ENCODE measurements at regions of chr5 and their contacts with region 1.

Region 1: DNA sequence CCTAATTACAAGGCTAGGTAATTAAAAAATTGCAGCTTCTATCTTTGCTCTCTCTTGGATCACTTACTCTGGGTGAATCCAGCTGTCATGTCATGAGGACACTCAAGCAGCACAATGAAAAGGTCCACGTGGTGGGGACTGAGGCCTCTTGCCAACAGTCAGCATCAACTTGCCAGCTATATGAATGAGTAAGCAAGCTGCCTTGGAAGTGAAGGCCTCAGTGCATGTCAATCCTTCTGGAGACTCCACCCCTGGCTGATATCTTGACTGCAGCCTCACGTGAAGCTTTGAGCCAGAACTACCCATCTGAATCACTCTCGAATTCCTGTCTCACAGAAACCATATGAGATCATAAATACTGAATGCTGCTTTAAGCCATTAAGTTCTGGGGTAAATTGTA is 140.5 kb downstream of the SNX18 start:
- DNase-seq: no peak
- ATAC-seq: no peak
- H3K4me3 ChIP-seq: no peak overlapping the region
- H3K27ac ChIP-seq: no peak overlapping the region
- H3K4me1 ChIP-seq: no peaks in the 10 kb centered on the region; the same call in 1 of the 2 replicates
- H3K27me3 ChIP-seq: no peaks in the 10 kb centered on the region
- CTCF ChIP-seq: no peak

Region 2: DNA sequence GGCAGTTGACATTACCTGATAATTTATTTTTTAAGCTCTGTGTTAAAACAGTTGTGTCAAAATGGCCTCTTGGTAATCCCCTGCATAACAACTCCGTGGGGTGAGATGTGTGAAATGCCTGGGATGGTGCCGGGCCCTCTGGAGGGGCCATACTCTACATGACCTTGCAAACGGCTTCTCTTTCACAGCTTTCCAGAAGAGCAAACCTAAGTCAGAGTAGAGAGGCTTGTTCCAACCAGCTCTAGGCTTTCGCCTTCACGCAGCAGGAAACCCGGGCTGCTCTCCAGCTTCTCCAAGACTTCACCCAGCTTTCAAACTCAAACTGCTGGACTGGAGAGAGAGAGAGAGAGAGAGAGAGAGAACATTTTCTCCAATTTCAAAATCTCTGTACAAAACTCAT is 20.4 kb before region 1 on chr5:
- CTCF ChIA-PET with region 1: no interaction called
- POLR2A ChIA-PET with region 1: no interaction called
- in situ Hi-C with region 1: no loop called
- intact Hi-C with region 1: loop called (anchors 2 kb)
- DNase-seq: no peak
- ATAC-seq: no peak
- H3K4me3 ChIP-seq: no peak overlapping the region
- H3K27ac ChIP-seq: no peak overlapping the region
- H3K4me1 ChIP-seq: no peaks in the 10 kb centered on the region
- H3K27me3 ChIP-seq: no peaks in the 10 kb centered on the region
- CTCF ChIP-seq: no peak